Colonic mucosa (tissue), 4 donors: ENCODE measurements at regions of chr17 and their contacts with region 1.

Region 1: GRCh38 chr17:27106347-27106981 is 187.4 kb upstream of the WSB1 start:
- DNase-seq: no peak
- H3K4me3 ChIP-seq: no peak overlapping the region
- H3K27ac ChIP-seq: no peak overlapping the region
- H3K4me1 ChIP-seq: no peaks in the 10 kb centered on the region
- H3K27me3 ChIP-seq: no peaks in the 10 kb centered on the region
- CTCF ChIP-seq: no peak

Region 2: GRCh38 chr17:27069842-27070508 is 36.5 kb before region 1 on chr17:
- intact Hi-C with region 1: loop called (anchors 10 kb)
- DNase-seq: no peak
- H3K4me3 ChIP-seq: no peak overlapping the region
- H3K27ac ChIP-seq: no peak overlapping the region
- H3K4me1 ChIP-seq: no peaks in the 10 kb centered on the region
- H3K27me3 ChIP-seq: no peaks in the 10 kb centered on the region
- CTCF ChIP-seq: no peak